Kidney (tissue), 22 donors: ENCODE measurements at regions of chr2 and their contacts with region 1.

Region 1: DNA sequence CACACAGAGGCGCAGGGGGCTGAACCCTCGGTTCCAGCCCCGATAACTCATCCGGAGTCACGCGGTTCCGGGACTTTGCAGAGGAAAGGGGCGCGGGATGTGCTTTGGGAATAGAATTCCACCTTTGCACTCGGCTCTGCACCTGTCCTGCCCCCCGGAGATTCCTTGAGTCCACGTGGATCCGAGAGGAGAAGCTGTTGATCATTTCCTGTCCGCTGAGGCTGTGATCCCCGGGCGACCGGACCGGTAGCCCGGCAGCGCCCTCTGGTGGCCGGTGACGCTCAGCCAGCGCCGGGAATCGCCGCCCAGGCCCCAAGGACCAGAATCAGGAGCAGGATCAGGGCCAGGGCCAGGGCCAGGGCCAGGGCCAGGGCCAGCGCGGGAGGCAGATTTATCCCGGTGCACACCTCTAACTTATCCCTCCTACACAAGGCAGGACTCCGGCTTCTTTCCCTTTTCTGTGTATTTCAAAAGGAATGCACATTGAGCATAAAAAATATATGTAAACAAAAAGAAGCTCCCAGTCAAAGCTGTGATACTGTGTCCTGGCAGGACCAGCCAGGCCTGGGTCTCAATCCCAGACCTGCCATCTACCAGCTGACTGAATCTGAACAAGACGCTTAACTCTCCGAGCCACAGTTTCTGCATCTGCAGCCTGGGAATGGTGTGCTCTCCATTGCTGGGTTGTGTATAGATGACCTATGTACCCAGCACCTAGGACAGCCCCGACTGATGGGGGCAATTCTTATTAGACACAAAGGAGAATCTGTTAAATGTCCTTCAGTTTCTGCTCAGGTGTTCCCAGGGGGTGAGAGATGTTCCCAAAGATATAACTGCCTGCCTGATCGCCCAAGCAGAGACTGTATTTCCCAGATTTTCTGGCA is 8.5 kb upstream of the SPATA3 start:
- DNase-seq: peak; percentile 86 to 90 (median 89)
- H3K4me3 ChIP-seq: peak overlapping the region in 2 of 3 donors; percentile 40 to 60
- H3K27ac ChIP-seq: no peak overlapping the region
- H3K4me1 ChIP-seq: peaks cover 0 to 4% (median 0%) of the 10 kb centered on the region in 3 donors
- H3K27me3 ChIP-seq: no peaks in the 10 kb centered on the region
- CTCF ChIP-seq: peak; percentile 98

Region 2: GRCh38 chr2:229686122-229686919 is 1301.1 kb before region 1 on chr2:
- intact Hi-C with region 1: no loop called
- DNase-seq: no peak
- H3K4me3 ChIP-seq: no peak overlapping the region
- H3K27ac ChIP-seq: no peak overlapping the region
- H3K4me1 ChIP-seq: no peaks in the 10 kb centered on the region
- H3K27me3 ChIP-seq: no peaks in the 10 kb centered on the region
- CTCF ChIP-seq: no peak

Region 3: GRCh38 chr2:230824406-230824978 is 162.9 kb before region 1 on chr2:
- intact Hi-C with region 1: loop called (anchors 10 kb)
- DNase-seq: peak in 4 of 5 donors; percentile 66 to 95 (median 84)
- H3K4me3 ChIP-seq: peak overlapping the region in 1 of 3 donors; percentile 14
- H3K27ac ChIP-seq: no peak overlapping the region
- H3K4me1 ChIP-seq: peaks cover 0 to 5% (median 0%) of the 10 kb centered on the region in 3 donors
- H3K27me3 ChIP-seq: no peaks in the 10 kb centered on the region
- CTCF ChIP-seq: peak; percentile 82

Region 4: DNA sequence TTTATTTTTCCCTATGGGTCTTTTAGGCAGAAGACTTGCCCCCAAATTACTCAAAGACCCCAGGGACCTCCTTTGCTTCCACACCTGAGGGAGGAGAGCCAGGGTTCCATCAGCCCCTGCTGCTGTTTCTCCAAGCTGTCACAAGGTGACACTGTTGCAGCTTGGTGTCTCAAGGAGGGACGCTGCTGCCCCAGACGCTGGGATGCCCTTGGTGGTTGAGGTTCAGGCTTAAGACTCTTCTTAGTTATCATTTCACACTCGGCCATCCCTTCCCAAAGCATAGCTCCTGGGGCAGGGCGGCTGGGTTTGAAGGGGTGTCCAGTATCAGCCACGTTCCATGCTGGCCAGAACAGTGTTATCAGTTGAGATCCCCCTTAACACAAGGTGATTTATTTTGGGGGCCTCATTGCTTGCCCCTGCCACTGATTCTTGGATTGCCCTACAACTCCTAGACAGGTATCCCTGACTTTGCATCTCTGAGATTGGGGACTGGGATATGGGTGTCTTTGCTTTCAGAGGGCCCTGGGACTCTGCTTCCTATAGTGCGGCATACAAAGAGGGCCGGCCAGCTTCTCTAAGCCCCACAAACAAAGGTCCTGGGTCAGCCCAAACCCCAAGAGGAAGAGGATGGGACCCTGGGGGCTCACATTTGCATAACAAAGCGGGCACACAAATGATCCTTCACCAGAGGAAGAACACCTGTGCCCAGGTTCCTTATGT is 85.0 kb before region 1 on chr2:
- intact Hi-C with region 1: loop called (anchors 10 kb)
- DNase-seq: peak in 4 of 5 donors; percentile 53 to 76 (median 63)
- H3K4me3 ChIP-seq: no peak overlapping the region
- H3K27ac ChIP-seq: no peak overlapping the region
- H3K4me1 ChIP-seq: no peaks in the 10 kb centered on the region
- H3K27me3 ChIP-seq: no peaks in the 10 kb centered on the region
- CTCF ChIP-seq: peak; percentile 78

Region 5: DNA sequence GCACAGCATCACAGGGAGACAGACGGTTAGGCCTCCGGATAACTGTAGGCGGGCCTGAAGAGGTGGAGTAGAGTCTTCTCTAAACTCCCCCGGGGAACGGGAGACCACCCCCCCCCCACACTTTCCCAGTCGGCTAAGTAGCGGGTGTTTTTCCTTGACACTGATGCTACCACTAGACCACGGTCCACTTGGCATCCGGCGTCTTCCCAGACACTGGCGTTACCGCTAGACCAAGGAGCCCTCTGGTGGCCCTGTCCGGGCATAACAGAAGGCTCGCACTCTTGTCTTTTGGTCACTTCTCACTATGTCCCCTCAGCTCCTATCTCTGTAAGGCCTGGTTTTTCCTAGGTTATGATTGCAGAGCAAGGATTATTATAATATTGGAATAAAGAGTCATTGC is 502.6 kb after region 1 on chr2:
- intact Hi-C with region 1: no loop called
- DNase-seq: no peak
- H3K4me3 ChIP-seq: no peak overlapping the region
- H3K27ac ChIP-seq: no peak overlapping the region
- H3K4me1 ChIP-seq: no peaks in the 10 kb centered on the region
- H3K27me3 ChIP-seq: no peaks in the 10 kb centered on the region
- CTCF ChIP-seq: no peak